CD4-positive, alpha-beta T cell (primary cell): ENCODE measurements at regions of chr20 and their contacts with region 1.

Region 1: GRCh38 chr20:49928401-49929141 is 7.6 kb upstream of the RNF114 start:
- DNase-seq: peak; percentile 66 to 90 (median 77)
- ATAC-seq: peak; percentile 99
- H3K4me3 ChIP-seq: no peak overlapping the region
- H3K4me3 Mint-ChIP-seq: peak overlapping the region; percentile 59
- H3K27ac ChIP-seq: no peak overlapping the region
- H3K27ac Mint-ChIP-seq: peak overlapping the region; percentile 58
- H3K4me1 ChIP-seq: peaks cover 7% of the 10 kb centered on the region
- H3K4me1 Mint-ChIP-seq: peaks cover 8% of the 10 kb centered on the region
- H3K27me3 ChIP-seq: no peaks in the 10 kb centered on the region
- H3K27me3 Mint-ChIP-seq: peaks cover 4% of the 10 kb centered on the region
- CTCF ChIP-seq: peak; percentile 97

Region 2: DNA sequence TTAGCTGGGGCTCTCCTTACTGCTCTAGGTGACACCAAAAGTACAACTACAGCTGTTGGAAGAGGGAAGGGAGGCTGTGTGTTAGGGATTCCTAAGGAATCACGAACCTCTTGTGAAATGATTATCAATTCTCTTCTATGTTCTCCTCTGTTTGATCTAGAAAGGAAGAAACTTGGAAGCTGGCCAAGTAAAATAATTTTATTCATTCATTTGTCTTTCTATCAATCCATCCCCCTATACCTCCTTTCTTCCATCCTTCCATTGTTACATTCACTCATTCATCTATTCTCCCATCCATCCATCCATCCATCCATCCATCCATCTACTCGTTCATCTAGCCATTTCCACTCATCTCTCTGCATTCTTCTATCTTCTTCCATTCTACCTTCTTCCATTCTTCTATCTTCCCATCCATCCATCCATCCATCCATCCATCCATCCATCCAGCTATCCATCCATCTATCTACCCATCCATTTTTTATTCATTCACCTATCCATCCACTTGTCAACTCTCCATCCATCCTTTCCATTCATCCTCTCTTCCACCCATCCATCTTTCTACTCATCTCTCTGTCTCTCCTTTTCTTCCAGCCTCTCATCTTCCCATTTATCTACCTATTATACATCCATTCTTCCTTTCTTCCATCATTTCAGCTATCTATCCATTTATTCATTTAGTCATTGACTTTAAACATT is 597.9 kb before region 1 on chr20:
- CTCF ChIA-PET with region 1: no interaction called
- POLR2A ChIA-PET with region 1: no interaction called
- intact Hi-C with region 1: loop called in 1 of 2 experiments (anchors 5 kb)
- DNase-seq: no peak
- ATAC-seq: no peak
- H3K4me3 ChIP-seq: no peak overlapping the region
- H3K4me3 Mint-ChIP-seq: no peak overlapping the region
- H3K27ac ChIP-seq: no peak overlapping the region
- H3K27ac Mint-ChIP-seq: no peak overlapping the region
- H3K4me1 ChIP-seq: no peaks in the 10 kb centered on the region
- H3K4me1 Mint-ChIP-seq: no peaks in the 10 kb centered on the region
- H3K27me3 ChIP-seq: peaks cover 0 to 4% of the 10 kb centered on the region in 2 experiments
- H3K27me3 Mint-ChIP-seq: peaks cover 29% of the 10 kb centered on the region
- CTCF ChIP-seq: no peak

Region 3: DNA sequence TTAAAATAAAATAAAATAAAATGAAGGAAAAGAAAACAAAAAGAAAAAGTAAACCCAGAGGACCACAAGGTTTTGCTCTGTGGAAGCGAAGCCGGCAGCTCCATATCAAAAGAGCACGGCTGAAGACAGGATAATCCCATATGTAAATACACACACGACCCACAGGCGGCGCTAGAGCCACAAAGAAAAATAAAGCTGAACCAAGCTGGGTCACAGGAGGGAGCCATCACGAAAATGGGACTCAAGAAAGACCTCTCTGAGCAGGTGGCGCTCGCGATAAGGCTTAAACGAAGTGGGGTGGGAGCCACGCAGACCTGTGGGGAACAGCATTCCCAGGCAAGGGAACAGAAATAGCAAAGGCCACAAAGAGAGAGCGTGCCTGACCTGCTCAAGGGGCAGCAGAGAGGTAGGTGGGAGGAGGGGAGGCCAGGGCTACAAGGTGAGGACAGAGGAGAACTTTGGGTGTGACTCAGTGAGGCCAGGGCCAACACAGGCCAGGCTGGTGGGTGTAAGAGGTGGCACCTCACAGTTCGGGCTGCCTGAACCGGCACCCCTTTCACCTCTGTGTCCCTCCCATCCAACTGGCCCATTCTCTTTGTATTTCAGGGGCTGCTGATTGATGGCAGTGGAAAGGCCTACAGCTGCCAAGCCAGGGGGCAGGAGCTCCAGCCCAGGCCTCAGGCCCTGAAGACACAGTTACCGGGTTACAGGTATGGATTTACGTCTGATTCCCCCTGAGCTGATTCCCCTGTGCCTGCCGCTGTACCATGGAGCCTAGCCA is 386.6 kb before region 1 on chr20:
- CTCF ChIA-PET with region 1: no interaction called
- POLR2A ChIA-PET with region 1: no interaction called
- intact Hi-C with region 1: loop called (anchors 2 to 5 kb)
- DNase-seq: peak; percentile 11 to 78 (median 36)
- ATAC-seq: peak; percentile 51
- H3K4me3 ChIP-seq: no peak overlapping the region
- H3K4me3 Mint-ChIP-seq: no peak overlapping the region
- H3K27ac ChIP-seq: no peak overlapping the region
- H3K27ac Mint-ChIP-seq: no peak overlapping the region
- H3K4me1 ChIP-seq: peaks cover 2% of the 10 kb centered on the region
- H3K4me1 Mint-ChIP-seq: no peaks in the 10 kb centered on the region
- H3K27me3 ChIP-seq: peaks cover 0 to 9% of the 10 kb centered on the region in 2 experiments
- H3K27me3 Mint-ChIP-seq: peaks cover 14% of the 10 kb centered on the region
- CTCF ChIP-seq: peak; percentile 38

Region 4: DNA sequence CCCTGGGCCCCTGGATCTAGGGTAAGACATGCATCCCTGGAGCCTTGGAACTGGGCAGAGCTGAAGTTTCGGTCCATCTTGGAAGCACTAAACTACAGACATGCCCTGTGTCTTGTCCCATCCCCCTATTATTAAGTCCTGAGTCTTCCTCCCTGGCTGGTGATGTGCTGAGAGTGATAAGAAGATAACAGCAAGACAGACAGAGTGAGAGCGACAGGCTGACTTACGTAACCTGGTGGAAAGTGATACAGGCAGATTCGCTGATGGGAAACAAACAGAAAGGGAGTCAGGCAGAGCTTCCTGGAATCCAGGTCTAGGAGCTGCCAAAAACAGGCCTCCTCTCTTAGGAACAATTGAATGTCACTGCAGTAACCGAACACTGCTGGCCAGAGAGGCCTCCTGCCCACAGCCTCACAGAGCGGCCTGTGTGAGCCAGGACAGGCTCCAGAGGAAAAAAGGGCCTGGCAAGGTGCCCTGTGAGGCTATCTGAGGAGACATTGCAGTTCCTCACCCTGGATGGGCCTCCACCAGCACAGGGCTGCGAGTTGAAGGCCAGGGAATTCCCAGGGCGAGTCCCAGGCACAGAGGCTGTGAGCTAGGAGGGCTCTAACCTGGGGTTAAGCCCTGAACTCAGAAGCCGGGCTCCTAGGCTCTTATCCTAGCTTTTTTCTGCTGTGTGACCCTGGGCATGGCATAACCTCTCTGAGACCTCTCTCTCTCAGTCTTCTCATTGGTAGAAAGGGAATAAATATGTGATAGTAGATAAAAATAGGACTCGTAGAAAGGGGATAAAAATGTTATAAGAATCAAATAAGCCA is 180.7 kb before region 1 on chr20:
- CTCF ChIA-PET with region 1: no interaction called
- POLR2A ChIA-PET with region 1: no interaction called
- intact Hi-C with region 1: no loop called
- DNase-seq: no peak
- ATAC-seq: no peak
- H3K4me3 ChIP-seq: no peak overlapping the region
- H3K4me3 Mint-ChIP-seq: no peak overlapping the region
- H3K27ac ChIP-seq: no peak overlapping the region
- H3K27ac Mint-ChIP-seq: no peak overlapping the region
- H3K4me1 ChIP-seq: peaks cover 12% of the 10 kb centered on the region
- H3K4me1 Mint-ChIP-seq: peaks cover 7% of the 10 kb centered on the region
- H3K27me3 ChIP-seq: peaks cover 0 to 3% of the 10 kb centered on the region in 2 experiments
- H3K27me3 Mint-ChIP-seq: peaks cover 26% of the 10 kb centered on the region
- CTCF ChIP-seq: no peak

Region 5: DNA sequence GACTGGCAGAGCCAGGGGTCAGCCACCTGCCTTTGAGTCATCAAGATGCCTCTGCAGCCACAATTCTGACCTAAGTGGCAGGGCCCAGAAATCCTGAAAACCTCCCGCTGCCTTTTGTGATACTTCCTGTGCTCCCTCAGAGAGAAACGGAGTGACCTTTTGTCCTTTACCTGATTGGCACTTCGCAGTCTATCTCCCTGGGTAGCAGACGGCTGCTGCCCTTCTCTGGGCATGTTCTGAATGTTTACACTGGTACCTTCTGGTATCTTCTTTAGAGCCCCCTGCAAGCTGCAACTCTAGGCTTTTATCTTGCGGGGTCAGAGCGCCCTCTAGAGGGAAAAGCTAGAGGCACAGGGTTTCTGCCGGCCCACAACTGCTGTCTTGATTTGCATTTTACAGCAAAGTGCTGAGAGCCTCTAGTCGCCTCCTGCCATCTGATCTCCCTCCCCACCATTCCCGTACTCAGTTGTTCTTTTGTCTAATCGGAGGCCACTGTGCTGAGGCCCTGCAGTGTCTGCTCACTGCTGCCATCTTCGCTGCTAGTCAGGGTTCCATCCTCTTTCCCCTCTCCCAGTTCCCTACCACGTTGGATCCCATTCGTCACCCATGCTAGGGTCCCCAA is 40.1 kb before region 1 on chr20:
- CTCF ChIA-PET with region 1: interaction called, 3 read pairs
- POLR2A ChIA-PET with region 1: no interaction called
- intact Hi-C with region 1: loop called in 1 of 2 experiments (anchors 1 kb)
- DNase-seq: peak in 13 of 14 experiments; percentile 19 to 73 (median 44)
- ATAC-seq: peak; percentile 69
- H3K4me3 ChIP-seq: no peak overlapping the region
- H3K4me3 Mint-ChIP-seq: no peak overlapping the region
- H3K27ac ChIP-seq: no peak overlapping the region
- H3K27ac Mint-ChIP-seq: peak overlapping the region; percentile 18
- H3K4me1 ChIP-seq: peaks cover 9% of the 10 kb centered on the region
- H3K4me1 Mint-ChIP-seq: peaks cover 4% of the 10 kb centered on the region
- H3K27me3 ChIP-seq: no peaks in the 10 kb centered on the region
- H3K27me3 Mint-ChIP-seq: no peaks in the 10 kb centered on the region
- CTCF ChIP-seq: peak; percentile 67

Region 6: DNA sequence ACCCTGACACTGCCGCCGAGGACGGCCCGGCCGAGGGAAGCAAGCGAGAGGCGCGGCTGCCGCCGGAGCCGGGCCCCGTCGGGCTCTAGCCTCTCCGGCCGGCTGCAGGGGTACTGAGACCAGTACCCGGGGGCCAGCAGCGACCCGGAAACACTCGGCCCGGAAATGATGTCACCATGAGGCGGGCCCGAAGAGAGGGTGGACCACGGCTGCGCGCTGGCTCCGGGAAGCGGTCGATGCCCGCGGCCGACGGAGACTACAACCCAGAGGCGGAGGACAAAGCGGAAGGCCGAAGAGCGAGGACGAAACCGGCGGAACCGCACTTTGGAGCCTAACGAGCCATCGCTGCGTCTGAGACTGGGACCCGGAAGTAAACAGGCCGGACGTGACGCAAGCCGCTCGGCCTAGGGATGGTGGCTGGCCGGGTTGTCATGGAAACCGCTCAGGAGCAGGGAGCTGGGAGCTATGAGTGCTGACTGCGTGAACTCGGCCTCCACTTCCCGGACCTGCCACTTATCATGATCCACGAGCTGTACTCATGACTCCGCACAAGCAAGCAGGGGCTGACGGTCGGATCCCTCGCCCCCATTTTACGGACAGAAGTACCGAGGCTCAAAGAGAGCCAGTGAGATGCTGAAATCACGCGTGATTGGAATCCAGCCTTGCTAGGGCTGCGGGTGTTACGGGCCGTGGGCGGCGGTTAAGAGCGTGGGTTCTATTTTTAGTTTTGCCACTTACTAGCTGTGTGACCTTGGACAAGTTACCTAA is 13.0 kb before region 1 on chr20 and contains the start of gene SPATA2:
- CTCF ChIA-PET with region 1: interaction called, 4 read pairs
- POLR2A ChIA-PET with region 1: interaction called, 4 read pairs
- intact Hi-C with region 1: loop called (anchors 2 kb)
- DNase-seq: peak; percentile 85 to 98 (median 91)
- ATAC-seq: peak; percentile 75
- H3K4me3 ChIP-seq: peak within 1 kb of the TSS; percentile 93
- H3K4me3 Mint-ChIP-seq: peak within 1 kb of the TSS; percentile 98
- H3K27ac ChIP-seq: peak within 1 kb of the TSS; percentile 99 to 100
- H3K27ac Mint-ChIP-seq: peak within 1 kb of the TSS; percentile 99
- H3K4me1 ChIP-seq: peaks cover 33% of the 10 kb centered on the region
- H3K4me1 Mint-ChIP-seq: peaks cover 39% of the 10 kb centered on the region
- H3K27me3 ChIP-seq: no peaks in the 10 kb centered on the region
- H3K27me3 Mint-ChIP-seq: no peaks in the 10 kb centered on the region
- CTCF ChIP-seq: no peak
- total RNA-seq, gene SPATA2: 16.0 to 16.4 TPM

Region 7: DNA sequence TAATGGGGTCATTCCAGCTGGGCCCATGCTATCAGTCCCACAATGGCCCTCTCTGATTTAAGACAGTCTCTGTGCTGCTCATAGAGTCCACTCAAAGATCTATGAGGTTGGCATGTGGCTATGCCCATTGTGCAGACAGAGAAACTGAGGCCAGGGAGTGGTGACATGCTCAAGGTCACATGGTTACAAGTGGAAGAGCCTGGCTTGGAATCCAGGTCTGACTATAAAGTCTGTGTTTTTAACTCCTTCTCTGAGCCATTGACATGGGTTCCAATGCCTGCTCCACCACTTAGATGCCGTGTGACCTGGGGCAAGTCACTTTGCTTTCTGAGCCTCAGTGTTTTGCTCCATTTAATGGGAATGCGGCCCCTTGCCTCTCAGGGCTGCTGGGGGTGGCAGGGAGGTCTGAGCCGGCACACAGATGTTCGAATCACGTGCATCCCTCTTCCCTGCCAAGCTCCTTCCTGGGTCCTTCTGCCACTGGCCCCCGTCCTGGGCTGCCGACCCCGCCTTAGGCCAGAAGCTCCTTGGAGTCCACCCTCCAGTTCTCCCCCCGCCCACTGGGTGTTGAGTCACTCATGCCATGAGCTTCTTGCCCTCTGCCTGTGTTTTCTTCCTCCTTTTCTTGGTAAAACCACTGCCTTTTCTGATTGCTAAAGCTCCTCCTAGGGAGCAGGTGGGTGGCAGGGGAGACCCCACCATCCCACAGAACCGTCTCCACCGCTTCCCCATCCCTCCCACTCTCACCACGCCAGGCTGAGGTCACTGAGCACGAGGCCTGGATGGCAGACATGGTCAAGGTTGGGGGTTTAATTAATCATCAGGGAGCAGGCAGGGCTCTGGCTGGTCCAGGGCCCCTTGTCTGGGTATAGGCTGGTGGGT is 297.8 kb after region 1 on chr20:
- CTCF ChIA-PET with region 1: no interaction called
- POLR2A ChIA-PET with region 1: no interaction called
- intact Hi-C with region 1: no loop called
- DNase-seq: peak in 2 of 14 experiments; percentile 48 to 60
- ATAC-seq: no peak
- H3K4me3 ChIP-seq: no peak overlapping the region
- H3K4me3 Mint-ChIP-seq: no peak overlapping the region
- H3K27ac ChIP-seq: no peak overlapping the region
- H3K27ac Mint-ChIP-seq: no peak overlapping the region
- H3K4me1 ChIP-seq: no peaks in the 10 kb centered on the region
- H3K4me1 Mint-ChIP-seq: no peaks in the 10 kb centered on the region
- H3K27me3 ChIP-seq: no peaks in the 10 kb centered on the region
- H3K27me3 Mint-ChIP-seq: no peaks in the 10 kb centered on the region
- CTCF ChIP-seq: no peak